AG04450 (cell line): ENCODE measurements at regions of chr1 and their contacts with region 1.

Region 1: DNA sequence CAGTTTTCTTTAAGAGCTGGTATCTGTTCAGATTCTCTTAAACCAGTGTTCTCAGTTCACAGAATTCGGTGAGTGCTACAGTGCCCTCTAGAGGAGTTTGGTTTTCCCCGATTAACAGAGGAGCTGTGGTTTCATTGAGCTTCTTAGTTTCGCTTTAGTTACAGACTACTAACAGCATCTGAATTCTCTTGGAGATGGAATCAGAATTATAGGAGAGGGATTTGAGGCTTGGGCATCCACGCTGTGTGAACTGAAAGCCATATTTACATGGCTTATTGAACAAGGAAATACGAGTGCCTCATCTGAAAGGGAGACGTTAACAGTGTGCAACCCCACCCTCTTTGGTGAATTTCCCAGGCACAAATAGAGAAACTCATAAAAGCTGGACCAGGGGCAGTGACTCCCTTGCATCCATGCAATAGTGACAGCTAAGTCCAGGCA is 202.0 kb downstream of the USH2A start:
- DNase-seq: peak; percentile 57
- H3K4me3 ChIP-seq: peak overlapping the region; percentile 65
- H3K27ac ChIP-seq: peak overlapping the region; percentile 65
- H3K27me3 ChIP-seq: no peaks in the 10 kb centered on the region
- CTCF ChIP-seq: peak; percentile 83

Region 2: GRCh38 chr1:215710036-215710898 is 511.0 kb before region 1 on chr1:
- CTCF ChIA-PET with region 1: interaction called, 12 read pairs
- POLR2A ChIA-PET with region 1: no interaction called
- DNase-seq: no peak
- H3K4me3 ChIP-seq: no peak overlapping the region
- H3K27ac ChIP-seq: no peak overlapping the region
- H3K27me3 ChIP-seq: no peaks in the 10 kb centered on the region
- CTCF ChIP-seq: peak; percentile 71

Region 3: DNA sequence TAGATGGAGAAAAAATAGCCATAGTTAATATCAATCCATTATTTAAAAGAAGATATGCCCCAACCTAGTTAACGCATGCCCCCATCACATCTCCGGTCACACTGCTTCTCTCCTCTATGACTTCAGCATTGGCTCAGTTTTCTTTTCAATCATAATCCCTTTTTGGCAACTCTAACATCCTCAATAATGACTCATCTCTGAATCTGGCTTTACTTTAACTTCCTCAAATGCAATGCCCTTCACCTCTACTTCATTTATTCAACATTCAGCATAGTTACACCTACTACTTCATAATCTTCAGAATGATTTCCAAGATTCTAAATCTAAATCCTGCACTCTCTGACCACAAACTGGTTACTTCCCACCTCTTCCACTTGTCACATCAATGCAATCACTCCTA is 215.4 kb before region 1 on chr1:
- CTCF ChIA-PET with region 1: interaction called, 14 read pairs
- POLR2A ChIA-PET with region 1: no interaction called
- DNase-seq: no peak
- H3K4me3 ChIP-seq: no peak overlapping the region
- H3K27ac ChIP-seq: no peak overlapping the region
- H3K27me3 ChIP-seq: no peaks in the 10 kb centered on the region
- CTCF ChIP-seq: no peak

Region 4: DNA sequence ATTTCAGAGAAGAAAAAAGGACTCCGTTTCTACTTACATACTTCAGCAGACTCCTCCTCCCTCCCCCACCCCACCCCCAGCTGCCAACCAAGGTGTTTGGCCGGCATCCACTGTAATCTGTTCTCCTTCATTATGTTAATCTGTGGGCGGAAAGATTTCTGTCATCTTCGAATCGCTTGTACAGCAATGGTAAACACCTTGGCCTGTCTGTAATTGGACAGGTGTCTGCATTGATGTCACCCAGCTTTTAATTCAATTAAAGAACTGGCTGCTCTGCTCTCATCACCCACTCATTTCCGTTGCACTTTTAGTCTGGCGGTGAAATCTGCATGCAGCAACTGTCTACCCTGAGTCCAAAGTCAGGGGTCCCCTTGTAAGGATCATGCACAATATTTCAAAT is 166.7 kb before region 1 on chr1:
- CTCF ChIA-PET with region 1: no interaction called
- POLR2A ChIA-PET with region 1: no interaction called
- DNase-seq: no peak
- H3K4me3 ChIP-seq: no peak overlapping the region
- H3K27ac ChIP-seq: no peak overlapping the region
- H3K27me3 ChIP-seq: no peaks in the 10 kb centered on the region
- CTCF ChIP-seq: no peak

Region 5: GRCh38 chr1:216183007-216183406 is 38.3 kb before region 1 on chr1:
- CTCF ChIA-PET with region 1: interaction called, 22 read pairs
- POLR2A ChIA-PET with region 1: no interaction called
- DNase-seq: peak; percentile 15
- H3K4me3 ChIP-seq: no peak overlapping the region
- H3K27ac ChIP-seq: no peak overlapping the region
- H3K27me3 ChIP-seq: no peaks in the 10 kb centered on the region
- CTCF ChIP-seq: no peak

Region 6: GRCh38 chr1:216238844-216239243 is 17.6 kb after region 1 on chr1:
- CTCF ChIA-PET with region 1: interaction called, 27 read pairs
- POLR2A ChIA-PET with region 1: no interaction called
- DNase-seq: no peak
- H3K4me3 ChIP-seq: no peak overlapping the region
- H3K27ac ChIP-seq: no peak overlapping the region
- H3K27me3 ChIP-seq: no peaks in the 10 kb centered on the region
- CTCF ChIP-seq: no peak

Region 7: GRCh38 chr1:216553040-216553439 is 331.8 kb after region 1 on chr1:
- CTCF ChIA-PET with region 1: interaction called, 11 read pairs
- POLR2A ChIA-PET with region 1: no interaction called
- DNase-seq: no peak
- H3K4me3 ChIP-seq: no peak overlapping the region
- H3K27ac ChIP-seq: no peak overlapping the region
- H3K27me3 ChIP-seq: no peaks in the 10 kb centered on the region
- CTCF ChIP-seq: no peak

Region 8: GRCh38 chr1:217660353-217661062 is 1439.2 kb after region 1 on chr1:
- CTCF ChIA-PET with region 1: interaction called, 10 read pairs
- POLR2A ChIA-PET with region 1: no interaction called
- DNase-seq: peak; percentile 70
- H3K4me3 ChIP-seq: no peak overlapping the region
- H3K27ac ChIP-seq: peak overlapping the region; percentile 85
- H3K27me3 ChIP-seq: no peaks in the 10 kb centered on the region
- CTCF ChIP-seq: peak; percentile 79